Dorsolateral prefrontal cortex (tissue), 120 donors: ENCODE measurements at regions of chr1 and their contacts with region 1.

Region 1: DNA sequence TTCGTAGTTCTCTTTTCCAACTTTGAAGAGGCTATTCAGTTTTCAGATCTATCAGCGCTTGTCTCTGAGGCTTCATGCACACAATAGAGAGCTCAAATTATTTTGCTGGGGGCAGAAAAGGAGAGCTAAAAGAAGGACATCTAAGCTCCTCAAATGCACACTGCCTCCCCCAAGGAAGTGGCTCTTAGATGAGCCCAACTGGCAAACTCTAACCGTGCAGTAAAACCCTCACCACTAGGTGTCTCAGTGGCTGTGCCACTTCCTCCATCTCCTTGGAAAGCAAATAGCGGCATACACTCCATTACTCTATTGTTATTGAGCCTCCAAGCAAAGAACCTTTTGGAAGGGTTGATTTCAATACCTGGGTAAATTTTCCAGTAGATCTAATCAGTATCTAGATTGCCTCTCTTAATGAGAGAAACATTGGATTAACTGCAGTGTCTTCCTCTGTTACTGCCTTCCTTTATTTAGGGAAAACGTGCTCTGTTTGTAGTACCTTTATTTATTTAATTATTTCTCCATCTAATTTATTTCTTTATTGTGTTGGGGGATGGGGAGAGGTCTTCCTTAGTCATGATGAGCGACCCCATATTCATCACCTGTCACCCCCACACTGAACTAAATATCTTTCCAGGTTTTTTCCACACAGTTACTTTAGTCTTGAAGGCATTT is 9.2 kb upstream of the SFPQ start:
- DNase-seq: peak in 9 of 10 donors; percentile 60 to 85 (median 69)
- H3K4me3 ChIP-seq: peak overlapping the region in 54 of 59 donors; percentile 1 to 60 (median 36)
- H3K27ac ChIP-seq: peak overlapping the region in 10 of 59 donors; percentile 1 to 49 (median 17)
- H3K27me3 ChIP-seq: no peaks in the 10 kb centered on the region
- CTCF ChIP-seq: peak; percentile 73 to 94 (median 87)

Region 2: GRCh38 chr1:35143737-35144508 is 58.3 kb before region 1 on chr1:
- intact Hi-C with region 1: no loop called
- DNase-seq: no peak
- H3K4me3 ChIP-seq: no peak overlapping the region
- H3K27ac ChIP-seq: no peak overlapping the region
- H3K27me3 ChIP-seq: no peaks in the 10 kb centered on the region
- CTCF ChIP-seq: no peak

Region 3: GRCh38 chr1:35777109-35777508 is 574.9 kb after region 1 on chr1:
- intact Hi-C with region 1: loop called in 1 of 2 experiments (anchors 5 kb)
- DNase-seq: no peak
- H3K4me3 ChIP-seq: no peak overlapping the region
- H3K27ac ChIP-seq: no peak overlapping the region
- H3K27me3 ChIP-seq: no peaks in the 10 kb centered on the region
- CTCF ChIP-seq: no peak